AG04450 (cell line): ENCODE measurements at regions of chr7 and their contacts with region 1.

Region 1: DNA sequence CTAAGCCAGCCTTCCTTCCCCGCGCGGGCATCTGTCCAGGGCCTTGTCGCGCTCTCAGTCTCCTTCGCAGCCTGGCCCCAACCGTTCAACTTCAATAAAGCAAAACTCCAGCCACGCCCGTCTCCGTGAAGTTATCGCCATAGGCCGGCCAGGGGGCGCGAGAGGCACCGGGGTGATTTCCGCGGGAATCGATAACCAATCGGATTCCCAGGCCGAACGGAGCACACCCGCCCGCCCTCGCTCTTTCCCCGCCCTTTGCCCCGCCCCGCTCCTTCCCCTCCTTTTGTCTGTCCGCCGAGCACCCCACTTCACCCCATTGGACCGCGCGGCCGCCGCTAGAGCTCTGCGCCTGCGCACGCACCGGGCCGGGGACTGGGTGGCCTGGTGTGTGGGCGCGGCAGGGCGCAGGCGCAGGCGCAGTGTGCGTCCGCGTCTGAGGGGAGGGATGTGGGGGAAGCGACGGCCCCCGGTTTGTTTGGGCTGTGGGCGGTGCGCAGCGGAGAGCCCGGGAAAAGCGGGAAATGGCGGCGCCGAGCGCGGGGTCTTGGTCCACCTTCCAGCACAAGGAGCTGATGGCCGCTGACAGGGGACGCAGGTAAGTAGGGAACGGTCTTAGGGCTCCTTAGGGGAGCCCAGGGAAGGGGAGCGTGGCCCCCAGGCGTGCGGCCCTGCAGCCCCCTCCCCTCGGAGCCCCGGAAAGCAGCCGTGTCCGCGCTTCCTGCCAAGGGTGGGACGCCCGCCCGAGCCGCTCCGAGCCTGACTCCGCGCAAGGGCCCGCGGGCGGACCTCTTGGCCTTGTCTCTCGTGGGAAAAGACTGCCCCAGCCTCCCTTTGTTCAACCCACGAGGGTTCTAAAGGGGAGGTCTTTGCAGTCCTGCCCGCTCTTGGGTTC is at the start of gene CASP2:
- DNase-seq: peak; percentile 91
- H3K4me3 ChIP-seq: peak within 1 kb of the TSS; percentile 79
- H3K27ac ChIP-seq: peak within 1 kb of the TSS; percentile 61
- H3K27me3 ChIP-seq: no peaks in the 10 kb centered on the region
- CTCF ChIP-seq: peak; percentile 44
- polyA plus RNA-seq, gene CASP2: 18.6 and 21.8 TPM in 2 replicates

Region 2: GRCh38 chr7:143222782-143223181 is 65.4 kb before region 1 on chr7:
- CTCF ChIA-PET with region 1: no interaction called
- POLR2A ChIA-PET with region 1: no interaction called
- DNase-seq: no peak
- H3K4me3 ChIP-seq: no peak overlapping the region
- H3K27ac ChIP-seq: no peak overlapping the region
- H3K27me3 ChIP-seq: peaks cover 11% of the 10 kb centered on the region
- CTCF ChIP-seq: no peak

Region 3: DNA sequence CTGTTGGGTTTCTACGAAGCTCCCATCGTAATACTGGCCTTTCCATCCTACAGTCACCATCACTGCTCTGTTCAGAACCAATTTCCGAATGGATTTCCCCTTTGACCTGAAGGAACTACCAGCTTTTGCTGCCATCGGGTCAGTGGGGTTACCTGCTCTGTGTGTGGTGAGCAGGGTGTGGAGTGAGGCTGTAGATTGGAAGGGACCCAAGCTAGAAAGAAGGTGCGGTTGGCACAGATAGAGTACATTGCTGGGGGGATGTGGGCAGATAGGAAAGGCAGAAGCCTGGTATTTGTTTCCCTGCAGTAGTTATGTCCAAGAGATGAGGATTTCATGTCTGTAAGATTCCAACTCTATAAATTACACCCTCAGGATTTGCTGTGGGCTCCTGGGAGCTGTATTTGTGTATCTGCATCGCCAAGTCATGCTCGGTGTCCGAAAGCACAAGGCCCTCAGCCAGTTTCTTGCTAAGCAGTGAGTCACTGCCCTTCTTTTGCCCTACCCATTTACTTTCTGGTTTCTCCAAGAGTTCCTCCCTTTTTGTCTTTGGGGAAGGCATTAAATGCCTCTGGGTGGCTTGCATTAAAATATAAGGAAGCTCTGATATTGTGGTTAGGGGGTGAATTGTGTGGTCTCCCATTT is 43.1 kb after region 1 on chr7:
- CTCF ChIA-PET with region 1: no interaction called
- POLR2A ChIA-PET with region 1: no interaction called
- DNase-seq: peak; percentile 77
- H3K4me3 ChIP-seq: no peak overlapping the region
- H3K27ac ChIP-seq: peak overlapping the region; percentile 66
- H3K27me3 ChIP-seq: no peaks in the 10 kb centered on the region
- CTCF ChIP-seq: no peak

Region 4: DNA sequence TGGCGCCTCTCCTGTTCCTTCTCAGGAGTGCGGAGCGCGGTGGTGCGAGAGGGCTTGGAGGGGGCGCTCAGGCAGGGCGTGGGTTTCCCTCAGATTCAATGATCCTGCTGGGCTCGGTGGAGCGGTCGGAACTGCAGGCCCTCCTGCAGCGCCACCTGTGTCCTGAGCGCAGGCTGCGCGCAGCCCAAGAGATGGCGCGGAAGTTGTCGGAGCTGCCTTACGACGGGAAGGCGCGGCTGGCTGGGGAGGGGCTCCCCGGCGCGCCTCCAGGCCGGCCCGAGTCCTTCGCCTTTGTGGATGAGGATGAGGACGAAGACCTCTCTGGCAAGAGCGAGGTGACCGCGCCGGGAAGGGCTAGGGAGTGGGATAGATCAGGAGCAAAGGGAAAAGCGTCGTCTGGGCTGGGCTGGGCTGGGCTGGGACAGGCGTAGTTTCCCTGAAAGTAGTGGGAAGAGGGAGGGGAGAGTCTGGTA is 57.3 kb after region 1 on chr7:
- CTCF ChIA-PET with region 1: interaction called, 16 read pairs
- POLR2A ChIA-PET with region 1: no interaction called
- DNase-seq: no peak
- H3K4me3 ChIP-seq: no peak overlapping the region
- H3K27ac ChIP-seq: no peak overlapping the region
- H3K27me3 ChIP-seq: peaks cover 39% of the 10 kb centered on the region
- CTCF ChIP-seq: peak; percentile 57